Endothelial cell of umbilical vein (primary cell): ENCODE measurements at regions of chr22 and their contacts with region 1.

Region 1: DNA sequence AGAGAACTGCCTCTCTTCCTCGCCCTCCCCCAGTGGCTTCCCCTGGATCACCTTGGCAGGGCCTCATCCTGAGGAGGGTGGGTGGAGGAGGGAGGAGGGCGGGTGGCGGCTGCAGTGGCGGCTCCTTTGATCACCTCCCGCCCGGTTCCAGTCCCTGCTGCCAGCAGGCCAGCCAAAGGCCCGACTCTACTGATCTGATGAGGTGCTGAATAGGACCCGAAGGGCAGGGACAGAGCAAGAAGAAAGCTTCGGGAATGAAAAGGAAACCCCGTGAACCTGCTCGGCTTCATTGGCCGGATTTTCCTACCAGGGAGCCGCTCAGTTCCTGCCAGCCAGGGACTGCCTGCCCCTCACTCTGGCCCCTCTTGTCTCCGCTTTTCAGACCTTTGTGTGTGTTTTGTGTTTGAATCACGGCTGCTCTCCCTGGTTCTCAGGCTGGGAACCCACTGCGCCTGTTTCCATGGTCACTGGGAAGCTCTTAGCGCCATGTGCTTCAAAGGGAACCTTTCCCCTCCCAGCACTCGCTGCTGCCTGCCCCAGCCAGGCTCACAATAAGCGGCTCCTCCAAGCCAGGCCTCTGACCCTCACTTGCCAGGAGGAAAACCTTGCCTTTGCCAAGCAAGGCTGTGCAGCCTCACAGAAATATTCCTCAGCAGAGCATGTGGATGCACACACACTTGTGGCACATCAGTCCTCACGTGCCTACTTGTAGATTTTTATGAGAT is 56.8 kb downstream of the C22orf31 start:
- DNase-seq: peak; percentile 29
- H3K4me3 ChIP-seq: no peak overlapping the region
- H3K27ac ChIP-seq: no peak overlapping the region
- H3K4me1 ChIP-seq: no peaks in the 10 kb centered on the region
- H3K27me3 ChIP-seq: no peaks in the 10 kb centered on the region
- CTCF ChIP-seq: no peak
- POLR2A ChIP-seq: no peak

Region 2: DNA sequence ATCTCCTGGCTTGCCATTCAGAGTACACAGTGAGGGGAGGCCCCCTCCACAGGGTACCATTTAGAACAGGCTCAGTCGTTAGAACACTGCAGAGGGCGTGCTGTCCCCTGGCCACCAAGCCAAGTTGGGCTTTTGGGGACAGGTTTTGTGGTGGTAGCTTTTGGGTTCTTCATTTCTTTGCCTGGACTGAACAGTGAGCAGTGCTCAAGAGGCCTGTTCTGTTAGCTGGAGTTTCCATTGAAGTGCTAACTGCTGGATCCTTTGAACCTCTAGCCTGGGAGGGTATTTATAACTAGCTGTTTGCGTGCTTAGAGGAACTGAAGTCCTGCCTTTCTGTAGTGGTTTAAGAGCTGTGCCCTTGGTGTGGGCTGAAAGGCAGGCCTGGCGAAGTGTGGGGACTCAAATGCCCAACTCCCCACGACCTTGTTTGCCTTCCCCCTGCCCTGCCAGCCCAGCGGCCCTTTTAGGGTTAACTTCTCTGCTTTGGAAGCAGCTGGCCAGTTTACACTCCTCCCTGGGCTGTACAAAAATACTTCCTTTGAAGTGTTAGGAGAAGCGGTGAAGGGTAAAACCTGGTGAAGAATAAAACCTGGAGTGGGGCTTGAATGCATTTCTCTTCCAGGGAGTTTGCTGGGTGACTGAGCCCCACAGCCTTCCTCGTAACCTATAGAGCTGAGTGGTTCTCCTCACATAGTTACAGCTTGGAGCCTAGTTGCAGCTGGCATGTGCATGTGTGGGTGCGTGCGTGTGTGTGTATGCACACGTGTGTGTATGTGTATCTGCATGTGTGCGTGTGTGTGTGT is 86.9 kb before region 1 on chr22:
- CTCF ChIA-PET with region 1: no interaction called
- POLR2A ChIA-PET with region 1: no interaction called
- dilution Hi-C with region 1: loop called (anchors 25 kb)
- intact Hi-C with region 1: no loop called
- DNase-seq: no peak
- H3K4me3 ChIP-seq: no peak overlapping the region
- H3K27ac ChIP-seq: no peak overlapping the region
- H3K4me1 ChIP-seq: no peaks in the 10 kb centered on the region
- H3K27me3 ChIP-seq: no peaks in the 10 kb centered on the region
- CTCF ChIP-seq: no peak
- POLR2A ChIP-seq: no peak

Region 3: GRCh38 chr22:29022101-29022817 is 17.4 kb after region 1 on chr22:
- CTCF ChIA-PET with region 1: no interaction called
- POLR2A ChIA-PET with region 1: no interaction called
- dilution Hi-C with region 1: no loop called
- intact Hi-C with region 1: no loop called
- DNase-seq: no peak
- H3K4me3 ChIP-seq: no peak overlapping the region
- H3K27ac ChIP-seq: no peak overlapping the region
- H3K4me1 ChIP-seq: peaks cover 14% of the 10 kb centered on the region
- H3K27me3 ChIP-seq: no peaks in the 10 kb centered on the region
- CTCF ChIP-seq: no peak
- POLR2A ChIP-seq: no peak